ENCODE measurements at regions of chr3 and their contacts with region 1.

Region 1: GRCh38 chr3:136752422-136753325 is 496 bp upstream of the STAG1 start:
- DNase-seq: peak; percentile 98
- ATAC-seq: peak; percentile 91
- H3K4me3 ChIP-seq: peak overlapping the region; percentile 77
- H3K27ac ChIP-seq: peak overlapping the region; percentile 99
- H3K4me1 ChIP-seq: peaks cover 3% of the 10 kb centered on the region
- H3K27me3 ChIP-seq: no peaks in the 10 kb centered on the region
- CTCF ChIP-seq: peak; percentile 37
- POLR2A ChIP-seq: peak; percentile 77; the same call in 1 of the 2 replicates
- RAD21 ChIP-seq: peak; percentile 35; the same call in 1 of the 2 replicates

Region 2: DNA sequence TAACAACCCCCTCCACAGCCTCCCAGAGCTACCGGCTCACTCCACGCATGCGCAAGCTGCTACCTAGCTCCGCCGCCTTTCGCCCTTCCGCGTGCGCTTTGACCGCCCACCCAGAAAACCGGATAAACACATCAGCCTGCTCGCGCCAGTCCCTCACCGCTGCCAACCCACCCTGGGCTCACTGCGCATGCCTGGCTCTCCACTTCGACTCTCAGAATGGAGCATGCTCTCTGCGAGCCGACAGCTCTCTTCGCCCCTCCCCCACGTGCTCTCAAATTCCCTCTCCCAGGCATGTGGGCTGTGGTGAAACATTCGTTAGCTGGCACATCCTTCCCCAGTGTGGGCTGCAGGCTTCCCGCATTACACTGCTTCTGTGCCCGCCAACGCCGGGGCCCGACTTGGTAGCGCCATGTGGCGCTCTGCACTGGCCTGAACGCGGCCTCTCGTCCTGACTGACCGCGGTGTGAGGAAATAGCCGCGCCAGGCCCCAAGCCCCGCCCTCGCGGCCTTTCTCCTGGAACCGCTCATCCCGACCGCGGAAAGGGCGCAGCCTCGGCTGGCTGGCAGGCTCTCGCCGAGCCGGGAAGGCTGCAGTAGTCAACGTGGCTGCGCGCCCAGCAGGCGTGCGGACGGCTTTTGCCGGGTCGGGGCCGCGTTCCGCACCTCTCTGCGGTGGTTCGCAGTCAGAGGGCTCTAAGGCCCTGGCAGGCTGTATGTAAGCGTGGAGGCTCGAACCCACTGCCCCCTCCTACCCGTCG is 556.1 kb before region 1 on chr3:
- CTCF ChIA-PET with region 1: interaction called, 4 read pairs
- POLR2A ChIA-PET with region 1: interaction called, 3 read pairs
- dilution Hi-C with region 1: no loop called
- in situ Hi-C with region 1: no loop called
- intact Hi-C with region 1: loop called (anchors 1 kb)
- DNase-seq: peak; percentile 100
- ATAC-seq: peak; percentile 79
- H3K4me3 ChIP-seq: peak overlapping the region; percentile 97
- H3K27ac ChIP-seq: peak overlapping the region; percentile 81
- H3K4me1 ChIP-seq: peaks cover 3% of the 10 kb centered on the region; the same call in 1 of the 2 replicates
- H3K27me3 ChIP-seq: no peaks in the 10 kb centered on the region
- CTCF ChIP-seq: no peak
- POLR2A ChIP-seq: peak; percentile 88
- RAD21 ChIP-seq: peak; percentile 9; the same call in 1 of the 2 replicates

Region 3: GRCh38 chr3:136390574-136390973 is 362.1 kb before region 1 on chr3:
- CTCF ChIA-PET with region 1: interaction called, 20 read pairs
- POLR2A ChIA-PET with region 1: interaction called, 6 read pairs
- dilution Hi-C with region 1: no loop called
- in situ Hi-C with region 1: loop called (anchors 10 kb)
- intact Hi-C with region 1: loop called (anchors 1 kb)
- DNase-seq: no peak
- ATAC-seq: no peak
- H3K4me3 ChIP-seq: no peak overlapping the region
- H3K27ac ChIP-seq: no peak overlapping the region
- H3K4me1 ChIP-seq: peaks cover 4% of the 10 kb centered on the region
- H3K27me3 ChIP-seq: no peaks in the 10 kb centered on the region
- CTCF ChIP-seq: no peak
- POLR2A ChIP-seq: no peak
- RAD21 ChIP-seq: no peak

Region 4: DNA sequence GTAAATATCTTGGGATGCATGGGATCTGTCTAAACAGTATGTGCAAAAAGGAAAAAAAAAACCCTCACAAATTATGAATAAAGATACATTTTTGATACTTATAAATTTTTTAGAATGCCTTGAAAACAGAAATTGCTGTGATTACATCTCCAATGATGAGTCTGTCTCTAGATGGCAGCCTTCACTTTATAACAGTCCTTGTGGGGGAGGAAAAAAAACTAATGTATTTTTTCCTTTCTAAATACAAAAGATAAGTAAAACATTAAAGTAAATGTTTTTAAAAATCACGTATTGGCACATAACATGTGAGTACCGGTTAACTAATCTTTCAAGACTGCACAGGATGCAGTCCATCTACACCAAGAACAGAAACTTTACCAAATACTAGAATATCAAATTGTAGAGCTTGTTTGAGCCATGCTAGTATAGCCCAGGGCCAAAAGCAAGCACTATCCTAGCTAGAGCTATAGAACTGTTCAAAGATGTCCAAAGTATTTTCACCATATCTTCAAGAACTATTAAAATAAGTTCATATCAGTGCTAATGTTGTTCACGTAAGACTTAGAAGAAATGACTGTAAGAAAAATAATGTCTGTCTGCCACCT is 206.9 kb before region 1 on chr3:
- CTCF ChIA-PET with region 1: interaction called, 35 read pairs
- POLR2A ChIA-PET with region 1: no interaction called
- dilution Hi-C with region 1: no loop called
- in situ Hi-C with region 1: no loop called
- intact Hi-C with region 1: loop called (anchors 1 kb)
- DNase-seq: peak; percentile 51
- ATAC-seq: peak; percentile 54; the same call in 1 of the 2 replicates
- H3K4me3 ChIP-seq: no peak overlapping the region
- H3K27ac ChIP-seq: no peak overlapping the region
- H3K4me1 ChIP-seq: peaks cover 13% of the 10 kb centered on the region
- H3K27me3 ChIP-seq: no peaks in the 10 kb centered on the region
- CTCF ChIP-seq: peak; percentile 53
- POLR2A ChIP-seq: no peak
- RAD21 ChIP-seq: peak; percentile 54

Region 5: GRCh38 chr3:136567599-136568188 is 185.0 kb before region 1 on chr3:
- CTCF ChIA-PET with region 1: no interaction called
- POLR2A ChIA-PET with region 1: no interaction called
- dilution Hi-C with region 1: no loop called
- in situ Hi-C with region 1: no loop called
- intact Hi-C with region 1: no loop called
- DNase-seq: no peak
- ATAC-seq: no peak
- H3K4me3 ChIP-seq: no peak overlapping the region
- H3K27ac ChIP-seq: no peak overlapping the region
- H3K4me1 ChIP-seq: no peaks in the 10 kb centered on the region
- H3K27me3 ChIP-seq: no peaks in the 10 kb centered on the region
- CTCF ChIP-seq: no peak
- POLR2A ChIP-seq: no peak
- RAD21 ChIP-seq: no peak

Region 6: GRCh38 chr3:136818769-136819391 is 66.2 kb after region 1 on chr3 and contains the start of gene SLC35G2:
- CTCF ChIA-PET with region 1: interaction called, 4 read pairs
- POLR2A ChIA-PET with region 1: no interaction called
- dilution Hi-C with region 1: no loop called
- in situ Hi-C with region 1: no loop called
- intact Hi-C with region 1: loop called (anchors 1 kb)
- DNase-seq: peak; percentile 52
- ATAC-seq: peak; percentile 79
- H3K4me3 ChIP-seq: peak within 1 kb of the TSS; percentile 48
- H3K27ac ChIP-seq: peak within 1 kb of the TSS; percentile 75
- H3K4me1 ChIP-seq: peaks cover 4% of the 10 kb centered on the region
- H3K27me3 ChIP-seq: no peaks in the 10 kb centered on the region
- CTCF ChIP-seq: 0 out of 2 replicates have a peak, but pooled peaks have one; percentile 4
- POLR2A ChIP-seq: peak; percentile 12; the same call in 1 of the 2 replicates
- RAD21 ChIP-seq: no peak
- total RNA-seq, gene SLC35G2: 6.6 and 8.6 TPM in 2 replicates

Region 7: DNA sequence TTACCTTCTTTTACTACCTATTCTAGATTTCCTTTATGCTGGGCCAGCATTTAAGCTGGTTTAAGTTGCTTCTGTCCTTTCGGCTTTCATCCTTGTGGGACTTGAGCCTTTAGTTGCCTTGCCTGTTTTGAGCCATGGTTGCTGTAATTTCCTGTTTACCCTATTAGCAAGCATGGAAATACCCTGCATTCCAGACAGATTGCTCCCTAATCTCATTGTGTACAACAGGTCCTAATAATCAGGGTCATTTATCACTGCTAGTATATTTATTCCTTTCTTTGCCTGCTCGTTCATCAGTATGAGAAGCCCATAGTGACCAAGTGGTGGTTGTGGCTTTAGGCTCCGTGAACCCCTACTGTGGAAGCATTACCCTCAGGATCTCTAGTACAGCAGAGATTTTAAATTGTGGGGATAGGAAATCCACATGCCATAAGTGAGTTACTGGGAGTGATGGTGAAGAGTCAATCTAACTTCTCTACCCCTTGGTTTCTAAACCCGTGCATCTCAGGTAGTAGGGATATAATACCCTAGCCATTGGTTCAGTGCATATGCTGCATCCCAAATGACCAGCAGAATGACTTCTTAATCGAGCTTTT is 141.3 kb after region 1 on chr3:
- CTCF ChIA-PET with region 1: no interaction called
- POLR2A ChIA-PET with region 1: no interaction called
- dilution Hi-C with region 1: no loop called
- in situ Hi-C with region 1: no loop called
- intact Hi-C with region 1: no loop called
- DNase-seq: peak; percentile 92
- ATAC-seq: peak; percentile 89
- H3K4me3 ChIP-seq: no peak overlapping the region
- H3K27ac ChIP-seq: peak overlapping the region; percentile 71; the same call in 1 of the 2 replicates
- H3K4me1 ChIP-seq: peaks cover 10% of the 10 kb centered on the region
- H3K27me3 ChIP-seq: no peaks in the 10 kb centered on the region
- CTCF ChIP-seq: no peak
- POLR2A ChIP-seq: no peak
- RAD21 ChIP-seq: no peak

Region 8: DNA sequence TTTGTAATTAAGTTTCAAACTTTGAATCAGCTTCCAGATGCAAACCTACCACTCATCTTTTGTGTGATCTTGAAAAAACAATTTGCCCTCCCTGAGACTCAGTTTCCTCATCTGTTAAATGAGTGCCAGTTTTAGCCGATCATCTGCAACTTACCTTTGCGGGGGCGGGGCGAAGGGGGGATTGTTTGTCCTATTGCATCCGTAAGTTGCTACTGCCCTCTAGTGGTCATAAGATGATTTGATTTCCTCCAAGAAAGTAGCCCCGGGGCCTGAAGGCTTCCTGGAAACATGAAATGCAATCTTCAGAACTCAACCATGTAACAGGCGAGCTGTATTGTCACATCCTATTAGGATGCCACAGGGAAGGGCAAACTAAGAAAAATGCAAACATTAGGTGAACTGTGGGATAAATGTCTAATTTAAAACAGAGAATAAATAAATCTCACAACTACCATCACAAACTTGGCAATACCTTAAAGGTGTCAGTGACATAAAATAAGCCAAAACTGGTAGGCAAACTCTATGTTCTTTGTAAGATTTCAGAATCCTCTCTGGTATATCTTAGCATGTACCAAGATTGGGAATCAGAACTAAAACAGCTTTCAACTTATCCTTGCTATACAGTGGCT is 1193.8 kb after region 1 on chr3:
- CTCF ChIA-PET with region 1: no interaction called
- POLR2A ChIA-PET with region 1: no interaction called
- dilution Hi-C with region 1: no loop called
- in situ Hi-C with region 1: no loop called
- intact Hi-C with region 1: loop called (anchors 10 kb)
- DNase-seq: peak; percentile 71
- ATAC-seq: peak; percentile 63; the same call in 1 of the 2 replicates
- H3K4me3 ChIP-seq: no peak overlapping the region
- H3K27ac ChIP-seq: no peak overlapping the region
- H3K4me1 ChIP-seq: no peaks in the 10 kb centered on the region
- H3K27me3 ChIP-seq: no peaks in the 10 kb centered on the region; the same call in none of the 2 replicates
- CTCF ChIP-seq: peak; percentile 70
- POLR2A ChIP-seq: no peak
- RAD21 ChIP-seq: peak; percentile 71